PC-9 (cell line): ENCODE measurements at regions of chr4 and their contacts with region 1.

Region 1: GRCh38 chr4:44279066-44279465 is 169.5 kb downstream of the KCTD8 start:
- DNase-seq: no peak
- H3K4me3 ChIP-seq: no peak overlapping the region
- H3K27ac ChIP-seq: no peak overlapping the region
- H3K4me1 ChIP-seq: no peaks in the 10 kb centered on the region
- H3K27me3 ChIP-seq: no peaks in the 10 kb centered on the region
- CTCF ChIP-seq: no peak

Region 2: GRCh38 chr4:45423876-45424275 is 1144.8 kb after region 1 on chr4:
- CTCF ChIA-PET with region 1: no interaction called
- POLR2A ChIA-PET with region 1: interaction called, 10 read pairs
- intact Hi-C with region 1: no loop called
- DNase-seq: no peak
- H3K4me3 ChIP-seq: no peak overlapping the region
- H3K27ac ChIP-seq: no peak overlapping the region
- H3K4me1 ChIP-seq: no peaks in the 10 kb centered on the region
- H3K27me3 ChIP-seq: no peaks in the 10 kb centered on the region
- CTCF ChIP-seq: no peak